Right ventricle myocardium inferior (tissue), 1 donor: ENCODE measurements at regions of chr17 and their contacts with region 1.

Region 1: GRCh38 chr17:64964796-64965195 is 45.5 kb upstream of the LRRC37A3 start:
- DNase-seq: no peak
- ATAC-seq: no peak

Region 2: GRCh38 chr17:64920026-64920418 is 44.8 kb before region 1 on chr17:
- intact Hi-C with region 1: loop called (anchors 1 kb)
- DNase-seq: no peak
- ATAC-seq: no peak

Region 3: GRCh38 chr17:65163990-65164495 is 199.2 kb after region 1 on chr17:
- intact Hi-C with region 1: no loop called
- DNase-seq: no peak
- ATAC-seq: no peak